ENCODE measurements at regions of chr3 and their contacts with region 1.

Region 1: GRCh38 chr3:73056014-73056844 is 5.2 kb upstream of the EBLN2 start:
- DNase-seq: no peak
- H3K4me3 ChIP-seq: no peak overlapping the region
- H3K27ac ChIP-seq: peak overlapping the region; percentile 37
- H3K4me1 ChIP-seq: peaks cover 70% of the 10 kb centered on the region
- H3K27me3 ChIP-seq: no peaks in the 10 kb centered on the region
- CTCF ChIP-seq: peak; percentile 66

Region 2: DNA sequence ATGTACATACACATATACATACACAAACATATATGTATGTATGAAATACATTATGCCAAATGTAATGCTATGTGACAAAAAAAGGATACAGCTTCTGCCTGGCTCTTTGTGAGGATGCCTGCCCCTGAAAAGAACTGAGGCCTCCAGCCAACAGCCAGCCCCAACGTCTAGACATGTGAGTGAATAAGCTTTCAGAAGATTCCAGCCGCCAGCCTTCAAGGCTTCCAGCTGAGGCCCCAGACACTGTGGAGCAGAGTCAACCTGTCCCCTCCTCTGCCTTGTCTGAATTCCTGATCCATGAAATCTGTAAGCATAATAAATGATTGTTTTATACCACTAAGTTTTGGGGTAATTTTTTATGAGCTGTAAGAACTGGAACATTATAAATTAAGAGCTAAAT is 143.7 kb before region 1 on chr3:
- intact Hi-C with region 1: no loop called
- DNase-seq: no peak
- H3K4me3 ChIP-seq: no peak overlapping the region
- H3K27ac ChIP-seq: no peak overlapping the region
- H3K4me1 ChIP-seq: peaks cover 11% of the 10 kb centered on the region
- H3K27me3 ChIP-seq: no peaks in the 10 kb centered on the region
- CTCF ChIP-seq: no peak

Region 3: GRCh38 chr3:72938471-72939265 is 117.6 kb before region 1 on chr3:
- intact Hi-C with region 1: loop called (anchors 5 kb)
- DNase-seq: peak; percentile 20
- H3K4me3 ChIP-seq: peak overlapping the region; percentile 14
- H3K27ac ChIP-seq: peak overlapping the region; percentile 80
- H3K4me1 ChIP-seq: peaks cover 14% of the 10 kb centered on the region
- H3K27me3 ChIP-seq: no peaks in the 10 kb centered on the region
- CTCF ChIP-seq: peak; percentile 71

Region 4: GRCh38 chr3:72996473-72997333 is 59.5 kb before region 1 on chr3 and contains the start of gene PPP4R2:
- intact Hi-C with region 1: loop called (anchors 10 kb)
- DNase-seq: peak; percentile 89
- H3K4me3 ChIP-seq: peak within 1 kb of the TSS; percentile 76
- H3K27ac ChIP-seq: peak within 1 kb of the TSS; percentile 92
- H3K4me1 ChIP-seq: peaks cover 54% of the 10 kb centered on the region
- H3K27me3 ChIP-seq: no peaks in the 10 kb centered on the region
- CTCF ChIP-seq: no peak
- total RNA-seq, gene PPP4R2: 55.5 TPM